ENCODE measurements at regions of chr16 and their contacts with region 1.

Region 1: GRCh38 chr16:56191156-56191815 is at the start of gene GNAO1:
- DNase-seq: peak; percentile 65
- H3K4me3 Mint-ChIP-seq: peak within 1 kb of the TSS; percentile 69
- H3K27ac Mint-ChIP-seq: no peak within 1 kb of the TSS
- H3K4me1 Mint-ChIP-seq: peaks cover 32% of the 10 kb centered on the region
- H3K27me3 Mint-ChIP-seq: peaks cover 52% of the 10 kb centered on the region
- total RNA-seq, gene GNAO1: 1.3 to 1.4 TPM

Region 2: DNA sequence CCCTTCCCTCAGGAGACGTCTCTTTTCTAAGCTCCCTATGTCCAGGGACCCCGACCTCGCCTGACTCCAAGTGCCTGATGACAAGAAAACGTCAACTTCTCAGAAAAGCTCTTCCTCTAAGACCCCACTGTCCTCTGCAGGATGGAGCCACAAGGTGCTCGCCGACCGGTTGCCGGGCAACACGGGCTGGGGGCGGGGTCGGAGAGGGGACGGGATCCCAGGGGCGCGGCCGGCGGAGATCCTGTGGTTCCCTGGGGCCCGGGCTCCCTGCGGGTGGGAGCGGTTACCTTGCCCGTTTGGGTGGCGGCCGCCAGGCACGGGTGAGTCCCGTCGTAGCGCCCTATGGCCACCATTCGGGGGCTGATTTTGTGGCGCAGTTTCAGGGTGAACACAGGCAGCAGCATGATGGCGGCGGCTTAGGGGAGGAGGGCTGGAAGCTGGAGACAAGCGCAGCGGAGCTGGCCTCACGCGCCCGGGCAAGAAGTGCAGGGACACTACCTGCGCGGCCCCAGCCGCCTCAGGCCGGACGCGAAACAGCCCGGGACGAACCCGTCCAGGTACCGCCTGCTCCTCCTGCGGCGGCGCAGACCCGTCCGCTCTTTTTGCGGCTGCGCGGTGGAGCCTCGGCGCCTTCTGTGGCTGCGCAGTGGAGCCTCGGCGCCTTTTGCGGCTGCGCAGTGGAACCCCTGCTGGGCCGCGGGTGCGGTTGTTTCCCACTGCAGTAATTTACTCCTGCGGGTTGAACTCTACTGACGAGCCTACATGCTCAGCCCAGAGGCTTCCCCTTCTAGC is 328.4 kb after region 1 on chr16 and contains the start of gene BBS2:
- CTCF ChIA-PET with region 1: no interaction called
- POLR2A ChIA-PET with region 1: no interaction called
- intact Hi-C with region 1: loop called (anchors 10 kb)
- DNase-seq: peak; percentile 93
- H3K4me3 Mint-ChIP-seq: peak within 1 kb of the TSS; percentile 79
- H3K27ac Mint-ChIP-seq: peak within 1 kb of the TSS; percentile 80
- H3K4me1 Mint-ChIP-seq: peaks cover 40% of the 10 kb centered on the region
- H3K27me3 Mint-ChIP-seq: no peaks in the 10 kb centered on the region
- total RNA-seq, gene BBS2: 21.5 to 22.6 TPM

Measured in activated CD4-positive, alpha-beta memory T cell treated with anti-CD3 and anti-CD28 coated beads for 36 hours (primary cell).